ENCODE measurements at regions of chr17 and their contacts with region 1.

Region 1: GRCh38 chr17:19507775-19508576 is 25.7 kb upstream of the SLC47A1 start:
- DNase-seq: peak; percentile 95
- H3K4me3 ChIP-seq: peak overlapping the region; percentile 64 to 83 (median 72)
- H3K27ac ChIP-seq: peak overlapping the region; percentile 97 to 98 (median 98)
- H3K4me1 ChIP-seq: peaks cover 0 to 13% (median 2%) of the 10 kb centered on the region in 4 donors
- H3K27me3 ChIP-seq: no peaks in the 10 kb centered on the region
- CTCF ChIP-seq: no peak
- EP300 ChIP-seq: no peak
- POLR2A ChIP-seq: peak; percentile 41 to 48

Region 2: GRCh38 chr17:19377602-19378392 is 130.2 kb before region 1 on chr17:
- intact Hi-C with region 1: loop called (anchors 5 kb)
- DNase-seq: peak; percentile 99
- H3K4me3 ChIP-seq: peak overlapping the region; percentile 63 to 93 (median 76)
- H3K27ac ChIP-seq: peak overlapping the region; percentile 90 to 97 (median 96)
- H3K4me1 ChIP-seq: peaks cover 0 to 47% (median 34%) of the 10 kb centered on the region in 4 donors
- H3K27me3 ChIP-seq: no peaks in the 10 kb centered on the region
- CTCF ChIP-seq: no peak
- EP300 ChIP-seq: no peak
- POLR2A ChIP-seq: peak; percentile 60 to 63

Region 3: DNA sequence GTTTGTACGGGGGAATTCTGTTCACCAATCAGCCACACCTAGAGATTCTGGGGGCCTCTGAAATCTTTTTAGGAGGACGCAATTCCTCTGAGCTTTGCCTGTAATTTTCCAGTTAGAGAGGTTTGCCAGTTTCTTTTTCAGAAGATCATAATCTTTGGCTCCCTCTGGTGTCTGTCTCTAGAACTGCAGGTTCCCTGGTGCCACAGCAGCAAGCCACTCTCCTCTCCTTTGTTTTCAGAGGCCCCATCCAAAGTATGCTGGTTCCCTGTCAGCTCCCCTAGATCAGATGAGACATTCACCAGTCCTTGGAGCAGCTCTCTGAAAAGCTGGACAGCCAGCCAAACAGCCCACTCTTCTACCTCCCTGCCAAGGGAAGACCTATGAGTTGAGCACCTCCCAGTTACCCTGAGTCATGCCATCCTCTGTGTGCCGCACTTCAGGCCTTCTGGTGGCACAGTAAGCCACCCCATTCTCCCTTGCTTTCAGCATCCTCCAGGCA is 60.8 kb before region 1 on chr17:
- intact Hi-C with region 1: loop called (anchors 2 kb)
- DNase-seq: peak; percentile 90
- H3K4me3 ChIP-seq: no peak overlapping the region
- H3K27ac ChIP-seq: peak overlapping the region; percentile 83 to 94 (median 88)
- H3K4me1 ChIP-seq: peaks cover 0 to 37% (median 35%) of the 10 kb centered on the region in 4 donors
- H3K27me3 ChIP-seq: no peaks in the 10 kb centered on the region
- CTCF ChIP-seq: peak; percentile 95 to 99 (median 96)
- EP300 ChIP-seq: peak in 1 of 4 donors; percentile 0
- POLR2A ChIP-seq: no peak

Region 4: DNA sequence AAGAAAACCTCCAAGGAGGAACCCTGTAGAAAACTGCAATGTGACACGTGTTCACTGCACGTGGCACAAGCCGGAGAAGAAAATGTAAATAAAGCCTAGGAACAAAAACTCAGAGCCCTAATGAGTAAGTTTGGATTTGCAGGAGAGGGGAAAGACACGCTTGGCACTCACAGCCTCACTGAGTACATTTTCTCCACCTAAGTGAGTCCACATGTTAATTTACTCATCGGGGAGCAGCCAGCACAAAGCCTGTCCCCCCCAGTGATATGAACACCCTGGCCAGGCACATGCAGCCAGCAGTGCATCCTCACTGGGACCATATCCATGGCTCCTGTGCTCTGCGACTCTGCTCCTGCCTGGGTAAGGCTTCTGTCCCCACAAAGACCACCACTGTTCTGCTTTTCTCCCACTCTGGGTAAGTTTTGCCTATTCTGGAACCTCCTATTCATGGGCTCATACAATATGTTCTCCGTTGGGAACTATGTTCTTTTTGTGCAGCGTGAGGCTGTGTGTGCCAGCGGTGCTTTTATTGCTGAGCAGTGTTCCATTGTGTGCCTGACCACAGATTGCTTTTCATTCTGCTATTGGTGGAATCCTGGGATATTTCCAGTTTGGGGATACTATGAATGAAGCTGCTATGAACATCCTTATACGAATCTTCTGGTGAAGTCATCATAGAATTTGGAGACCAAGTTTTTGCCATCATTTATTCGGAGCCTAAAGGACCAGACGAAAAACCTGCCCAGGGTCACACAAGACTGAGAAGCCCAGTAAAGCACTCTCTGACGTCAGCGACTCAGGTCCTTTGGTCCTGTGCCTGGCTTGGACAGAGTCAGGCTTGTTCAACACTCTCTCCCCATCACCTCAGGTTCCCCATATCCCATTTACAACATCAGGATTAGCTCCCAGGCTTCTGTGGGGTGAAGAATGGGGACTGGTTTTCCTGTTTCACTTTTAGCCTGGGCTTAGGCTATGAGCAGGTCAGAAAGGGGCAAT is 43.6 kb before region 1 on chr17:
- intact Hi-C with region 1: loop called (anchors 5 kb)
- DNase-seq: peak; percentile 83
- H3K4me3 ChIP-seq: peak overlapping the region in 1 of 4 donors; percentile 1
- H3K27ac ChIP-seq: peak overlapping the region; percentile 58 to 84 (median 78)
- H3K4me1 ChIP-seq: peaks cover 0 to 44% (median 40%) of the 10 kb centered on the region in 4 donors
- H3K27me3 ChIP-seq: no peaks in the 10 kb centered on the region
- CTCF ChIP-seq: no peak
- EP300 ChIP-seq: peak in 1 of 4 donors; percentile 15
- POLR2A ChIP-seq: no peak

Region 5: DNA sequence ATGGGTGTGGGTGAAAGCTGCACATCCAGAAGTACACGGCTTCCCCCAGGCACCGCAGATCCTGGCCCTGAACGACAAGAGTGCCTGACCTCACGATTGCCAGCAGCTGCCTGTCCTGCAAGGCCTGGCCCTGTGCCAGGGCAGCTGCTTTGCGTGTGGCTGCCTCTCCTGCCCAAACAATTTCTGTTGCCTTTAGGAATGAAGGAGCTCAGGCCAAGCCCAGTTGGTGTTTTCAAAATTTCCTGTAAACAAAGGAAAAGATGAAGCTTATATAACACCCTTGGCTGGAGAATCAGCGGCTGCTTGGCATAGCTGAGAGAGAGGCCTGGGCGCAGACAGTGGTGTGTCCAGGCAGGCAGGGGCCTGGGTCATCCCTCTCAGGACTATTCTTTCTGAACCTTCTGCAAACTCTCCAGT is 220.1 kb after region 1 on chr17:
- intact Hi-C with region 1: loop called (anchors 5 kb)
- DNase-seq: peak; percentile 95
- H3K4me3 ChIP-seq: no peak overlapping the region
- H3K27ac ChIP-seq: peak overlapping the region; percentile 82 to 93 (median 90)
- H3K4me1 ChIP-seq: peaks cover 0 to 44% (median 35%) of the 10 kb centered on the region in 4 donors
- H3K27me3 ChIP-seq: no peaks in the 10 kb centered on the region
- CTCF ChIP-seq: no peak
- EP300 ChIP-seq: peak in 2 of 4 donors; percentile 19 to 49
- POLR2A ChIP-seq: no peak

Measured in sigmoid colon (tissue), 7 donors.